GM12878 (cell line): ENCODE measurements at regions of chr17 and their contacts with region 1.

Region 1: GRCh38 chr17:8016632-8017478 is 14.4 kb downstream of the GUCY2D start:
- DNase-seq: no peak
- ATAC-seq: peak; percentile 87
- H3K4me3 ChIP-seq: no peak overlapping the region
- H3K27ac ChIP-seq: no peak overlapping the region
- H3K4me1 ChIP-seq: no peaks in the 10 kb centered on the region
- H3K27me3 ChIP-seq: peaks cover 0 to 3% of the 10 kb centered on the region in 2 experiments; a peak in 3 of 4 replicates
- CTCF ChIP-seq: peak; percentile 51 to 77 (median 63)
- EP300 ChIP-seq: no peak
- POLR2A ChIP-seq: no peak
- RAD21 ChIP-seq: peak; percentile 46

Region 2: DNA sequence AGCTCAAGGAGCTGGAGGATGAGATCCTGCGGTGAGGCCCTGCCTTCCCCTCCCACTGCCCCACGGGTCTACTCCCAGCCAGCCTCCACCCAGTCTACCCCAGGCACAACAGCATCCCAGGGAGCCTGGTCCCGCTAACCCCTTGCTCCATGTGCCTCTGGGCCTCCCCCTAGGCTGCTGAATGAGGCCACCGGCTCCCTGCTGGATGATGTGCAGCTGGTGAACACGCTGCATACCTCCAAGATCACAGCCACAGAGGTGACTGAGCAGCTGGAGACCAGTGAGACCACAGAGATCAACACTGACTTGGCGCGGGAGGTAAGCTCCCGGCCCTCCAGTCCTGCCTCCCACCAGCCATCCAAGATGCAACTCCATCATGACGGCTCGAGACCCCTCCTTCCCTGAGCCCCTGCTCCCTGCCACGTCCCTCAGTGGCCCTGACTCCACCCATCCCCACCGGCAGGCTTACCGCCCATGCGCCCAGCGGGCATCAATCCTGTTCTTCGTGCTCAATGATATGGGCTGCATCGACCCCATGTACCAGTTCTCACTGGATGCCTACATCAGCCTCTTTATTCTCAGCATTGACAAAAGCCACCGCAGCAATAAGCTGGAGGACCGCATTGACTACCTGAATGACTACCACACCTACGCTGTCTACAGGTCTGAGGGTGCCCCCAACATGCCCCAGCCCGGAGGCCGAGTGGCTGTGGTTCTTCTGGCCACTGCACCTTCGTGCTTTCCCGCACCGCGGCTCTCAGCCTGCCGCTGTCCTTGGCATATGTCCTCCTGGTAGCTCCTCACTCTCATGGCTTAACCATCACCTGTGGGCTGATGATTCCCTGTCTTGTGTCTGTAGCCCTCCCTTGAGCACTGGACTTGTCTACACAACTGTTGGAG is 197.9 kb before region 1 on chr17:
- CTCF ChIA-PET with region 1: interaction called, 3 read pairs
- POLR2A ChIA-PET with region 1: interaction called, 10 read pairs
- RAD21 ChIA-PET with region 1: no interaction called
- SMC1A ChIA-PET with region 1: interaction called, 3 read pairs
- in situ Hi-C with region 1: no loop called
- intact Hi-C with region 1: no loop called
- DNase-seq: no peak
- ATAC-seq: no peak
- H3K4me3 ChIP-seq: no peak overlapping the region
- H3K27ac ChIP-seq: no peak overlapping the region
- H3K4me1 ChIP-seq: no peaks in the 10 kb centered on the region
- H3K27me3 ChIP-seq: peaks cover 0 to 2% of the 10 kb centered on the region in 2 experiments; a peak in 2 of 4 replicates
- CTCF ChIP-seq: no peak
- EP300 ChIP-seq: no peak
- POLR2A ChIP-seq: no peak
- RAD21 ChIP-seq: no peak

Region 3: DNA sequence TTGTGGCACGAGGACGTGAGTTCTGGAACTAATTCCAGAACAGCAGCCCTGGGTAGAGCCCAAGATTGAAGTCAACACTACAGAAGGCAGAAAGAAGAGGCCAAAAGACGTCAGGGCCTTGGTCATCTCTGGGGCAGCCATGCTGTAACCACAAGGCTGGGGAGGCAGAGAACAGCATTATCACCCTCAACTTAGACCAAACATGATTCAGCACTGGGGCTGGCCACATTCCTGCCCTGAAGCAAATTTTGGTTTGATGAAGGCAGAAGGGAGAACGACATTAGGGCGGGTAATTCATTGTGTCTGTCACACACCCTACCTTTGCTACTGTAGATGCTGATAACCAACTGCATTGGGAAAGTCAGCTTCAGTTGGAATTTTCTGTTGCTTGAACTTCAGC is 12.3 kb after region 1 on chr17:
- CTCF ChIA-PET with region 1: interaction called, 3 read pairs
- POLR2A ChIA-PET with region 1: interaction called, 13 read pairs
- RAD21 ChIA-PET with region 1: no interaction called
- SMC1A ChIA-PET with region 1: interaction called, 3 read pairs
- in situ Hi-C with region 1: no loop called
- intact Hi-C with region 1: no loop called
- DNase-seq: no peak
- ATAC-seq: no peak
- H3K4me3 ChIP-seq: no peak overlapping the region
- H3K27ac ChIP-seq: no peak overlapping the region
- H3K4me1 ChIP-seq: no peaks in the 10 kb centered on the region
- H3K27me3 ChIP-seq: peaks cover 0 to 5% of the 10 kb centered on the region in 2 experiments; a peak in 2 of 4 replicates
- CTCF ChIP-seq: no peak
- EP300 ChIP-seq: no peak
- POLR2A ChIP-seq: no peak
- RAD21 ChIP-seq: no peak

Region 4: DNA sequence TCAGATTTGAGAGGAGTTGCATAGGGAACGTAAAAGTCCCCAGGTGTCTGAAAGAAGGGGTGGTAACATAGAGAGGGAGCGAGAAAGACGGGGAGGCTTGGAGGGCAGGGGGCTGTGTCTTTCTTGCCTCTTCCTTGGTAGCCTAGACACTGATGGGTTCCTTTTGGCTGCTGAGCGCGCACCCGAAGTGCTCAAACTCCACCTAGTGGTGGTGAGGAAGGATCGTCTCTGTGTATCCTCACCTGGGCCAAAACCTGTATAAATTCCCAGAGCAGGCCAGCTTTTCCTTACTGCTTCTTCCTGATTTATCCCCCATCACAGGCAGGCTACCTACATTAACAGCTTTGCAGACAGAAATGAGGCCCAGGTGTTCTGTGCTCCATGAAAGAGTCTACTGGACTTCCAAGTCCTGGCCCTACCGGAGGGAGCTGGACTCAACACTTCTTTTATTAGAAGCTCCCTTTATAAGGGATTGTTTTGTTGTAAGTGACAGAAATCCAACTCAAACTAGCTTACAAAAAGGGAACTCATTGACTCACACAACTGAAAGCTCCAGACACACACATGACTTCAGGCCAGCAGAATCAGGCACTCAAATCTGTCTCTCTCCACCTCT is 283.9 kb after region 1 on chr17:
- CTCF ChIA-PET with region 1: no interaction called
- POLR2A ChIA-PET with region 1: no interaction called
- RAD21 ChIA-PET with region 1: no interaction called
- SMC1A ChIA-PET with region 1: no interaction called
- in situ Hi-C with region 1: no loop called
- intact Hi-C with region 1: no loop called
- DNase-seq: peak; percentile 31
- ATAC-seq: peak; percentile 98
- H3K4me3 ChIP-seq: no peak overlapping the region
- H3K27ac ChIP-seq: no peak overlapping the region
- H3K4me1 ChIP-seq: no peaks in the 10 kb centered on the region
- H3K27me3 ChIP-seq: no peaks in the 10 kb centered on the region
- CTCF ChIP-seq: peak; percentile 86 to 96 (median 90); a peak in 5 of 6 replicates
- EP300 ChIP-seq: no peak
- POLR2A ChIP-seq: no peak
- RAD21 ChIP-seq: peak; percentile 90